Ascending aorta (tissue), 2 donors: ENCODE measurements at regions of chr15 and their contacts with region 1.

Region 1: GRCh38 chr15:64381000-64381752 is at the start of gene PCLAF:
- DNase-seq: peak; percentile 85 to 97
- H3K4me3 ChIP-seq: peak within 1 kb of the TSS; percentile 57 to 68
- H3K27ac ChIP-seq: no peak within 1 kb of the TSS
- H3K4me1 ChIP-seq: peaks cover 0 to 6% of the 10 kb centered on the region in 2 donors
- H3K27me3 ChIP-seq: no peaks in the 10 kb centered on the region
- CTCF ChIP-seq: no peak
- total RNA-seq, gene PCLAF: not detected

Region 2: DNA sequence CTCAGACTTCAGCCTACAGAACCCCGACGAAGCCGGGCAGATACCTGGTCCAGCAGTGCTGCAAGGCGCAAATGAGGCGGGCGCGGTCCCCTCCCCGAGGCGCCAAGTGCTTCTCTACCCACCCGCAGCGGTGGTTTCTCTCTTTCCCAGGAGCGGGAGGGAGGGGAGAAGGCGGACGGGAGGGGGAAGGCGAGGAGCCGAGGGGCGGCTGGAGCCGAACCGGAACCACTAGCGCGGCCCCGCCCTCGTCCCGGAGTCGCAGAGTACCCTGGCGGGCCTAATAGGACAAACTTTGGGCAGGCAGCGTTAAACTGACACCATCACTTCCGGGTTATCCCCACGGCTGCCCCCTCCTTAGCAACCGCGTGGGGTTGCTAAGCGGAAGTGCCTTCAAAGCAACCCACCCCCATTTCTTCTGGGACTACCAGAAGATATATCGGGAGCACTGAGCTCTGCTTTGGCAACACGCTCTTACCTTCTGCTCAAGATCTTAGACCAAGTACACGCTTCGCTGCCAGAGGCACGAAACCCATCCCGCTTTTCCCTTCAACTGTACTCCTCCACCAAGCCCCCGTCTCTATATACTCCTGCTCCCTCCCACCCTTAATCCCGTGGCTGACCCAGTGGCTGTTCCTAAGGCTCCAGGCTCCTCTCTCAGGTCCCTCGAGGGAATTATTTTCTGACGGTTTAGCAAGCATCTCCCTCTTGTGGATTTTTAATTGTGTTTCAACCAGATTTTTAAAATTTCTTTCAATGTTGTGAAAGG is 25.0 kb before region 1 on chr15 and contains the start of gene CSNK1G1:
- intact Hi-C with region 1: loop called (anchors 1 kb)
- DNase-seq: peak; percentile 84 to 97
- H3K4me3 ChIP-seq: peak within 1 kb of the TSS; percentile 82 to 97
- H3K27ac ChIP-seq: peak within 1 kb of the TSS; percentile 27 to 63
- H3K4me1 ChIP-seq: peaks cover 0 to 7% of the 10 kb centered on the region in 2 donors
- H3K27me3 ChIP-seq: no peaks in the 10 kb centered on the region
- CTCF ChIP-seq: peak; percentile 15 to 40 (median 24)
- total RNA-seq, gene CSNK1G1: 12.9 TPM

Region 3: DNA sequence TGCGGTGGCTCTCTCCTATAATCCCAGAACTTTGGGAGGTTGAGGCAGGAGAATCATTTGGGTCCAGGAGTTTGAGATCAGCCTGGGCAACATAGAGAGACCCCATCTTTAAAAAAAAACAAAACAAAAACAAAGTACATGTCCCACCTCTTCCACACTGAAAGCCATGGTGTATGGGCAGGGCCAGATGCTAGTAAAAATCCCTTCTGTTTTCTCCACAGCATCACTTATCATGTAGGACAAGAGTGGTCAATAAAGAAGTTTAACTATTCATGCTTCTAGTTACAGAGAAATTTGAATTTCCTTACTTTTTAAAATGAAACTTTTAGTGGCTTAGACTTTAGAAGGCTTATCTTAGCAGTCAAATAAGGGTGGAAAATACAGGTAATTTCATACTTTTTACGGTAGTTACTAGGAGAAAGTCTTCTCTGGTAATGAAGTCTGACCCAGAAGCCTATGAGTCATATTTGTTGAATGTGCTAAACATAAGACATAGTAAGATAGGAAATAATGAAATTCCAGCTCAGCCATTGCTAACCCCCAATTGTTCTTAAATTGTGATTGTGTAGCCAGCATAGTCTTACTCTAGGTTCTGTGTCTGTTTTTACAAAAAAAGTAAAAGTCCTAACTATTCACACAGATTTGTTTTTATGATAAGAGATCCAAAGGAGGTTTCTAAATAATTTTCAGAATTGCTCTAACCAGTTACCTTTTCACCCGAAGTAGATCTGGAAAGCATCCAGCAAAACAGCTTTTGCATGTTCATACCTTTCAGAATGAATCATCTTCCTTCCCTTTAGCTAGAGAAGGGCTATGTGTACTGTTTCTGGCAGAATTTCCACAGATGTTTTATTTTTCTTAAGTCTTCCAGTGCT is 62.8 kb after region 1 on chr15:
- intact Hi-C with region 1: no loop called
- DNase-seq: no peak
- H3K4me3 ChIP-seq: peak overlapping the region in 1 of 2 donors; percentile 3
- H3K27ac ChIP-seq: peak overlapping the region; percentile 24 to 66
- H3K4me1 ChIP-seq: peaks cover 0 to 8% of the 10 kb centered on the region in 2 donors
- H3K27me3 ChIP-seq: no peaks in the 10 kb centered on the region
- CTCF ChIP-seq: no peak

Region 4: GRCh38 chr15:64693134-64693533 is 312.0 kb after region 1 on chr15:
- intact Hi-C with region 1: no loop called
- DNase-seq: peak in 1 of 2 donors; percentile 82
- H3K4me3 ChIP-seq: no peak overlapping the region
- H3K27ac ChIP-seq: peak overlapping the region; percentile 51 to 66
- H3K4me1 ChIP-seq: peaks cover 11 to 37% of the 10 kb centered on the region in 2 donors
- H3K27me3 ChIP-seq: no peaks in the 10 kb centered on the region
- CTCF ChIP-seq: no peak